Caco-2 (cell line): ENCODE measurements at regions of chr3 and their contacts with region 1.

Region 1: DNA sequence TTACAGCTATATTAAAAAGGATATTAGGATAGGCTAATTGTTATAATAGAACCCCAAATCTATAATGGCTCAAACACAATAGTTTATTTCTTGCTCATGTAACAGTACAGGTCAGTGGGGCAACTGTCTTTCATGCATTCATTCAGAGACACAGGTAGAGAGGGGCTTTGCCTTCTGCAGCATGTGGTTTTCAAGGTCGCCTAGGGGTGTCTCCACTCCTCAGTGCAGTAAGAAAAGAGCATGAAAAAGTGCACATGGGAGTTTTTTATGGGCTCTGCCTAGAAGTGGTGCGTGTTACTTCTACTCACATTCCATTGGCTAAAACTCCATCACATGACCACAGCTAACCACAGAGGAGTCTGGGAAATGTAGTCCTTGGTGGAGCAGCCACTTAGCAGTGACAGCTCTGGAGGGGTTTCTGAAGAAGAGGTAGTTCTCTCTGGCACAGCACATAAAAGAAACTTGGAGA is 1.8 kb downstream of the ZBTB38 start:
- DNase-seq: peak; percentile 83 to 85
- H3K4me3 ChIP-seq: no peak overlapping the region
- H3K4me3 Mint-ChIP-seq: peak overlapping the region; percentile 74
- H3K27ac Mint-ChIP-seq: peak overlapping the region; percentile 97
- H3K4me1 ChIP-seq: peaks cover 39% of the 10 kb centered on the region
- H3K4me1 Mint-ChIP-seq: peaks cover 46% of the 10 kb centered on the region
- H3K27me3 ChIP-seq: no peaks in the 10 kb centered on the region
- H3K27me3 Mint-ChIP-seq: no peaks in the 10 kb centered on the region
- CTCF ChIP-seq: peak; percentile 53 to 66

Region 2: GRCh38 chr3:141227752-141228151 is 142.3 kb before region 1 on chr3:
- CTCF ChIA-PET with region 1: no interaction called
- POLR2A ChIA-PET with region 1: no interaction called
- intact Hi-C with region 1: no loop called
- DNase-seq: no peak
- H3K4me3 ChIP-seq: no peak overlapping the region
- H3K4me3 Mint-ChIP-seq: no peak overlapping the region
- H3K27ac Mint-ChIP-seq: no peak overlapping the region
- H3K4me1 ChIP-seq: peaks cover 27% of the 10 kb centered on the region
- H3K4me1 Mint-ChIP-seq: peaks cover 27% of the 10 kb centered on the region
- H3K27me3 ChIP-seq: no peaks in the 10 kb centered on the region
- H3K27me3 Mint-ChIP-seq: no peaks in the 10 kb centered on the region
- CTCF ChIP-seq: no peak

Region 3: DNA sequence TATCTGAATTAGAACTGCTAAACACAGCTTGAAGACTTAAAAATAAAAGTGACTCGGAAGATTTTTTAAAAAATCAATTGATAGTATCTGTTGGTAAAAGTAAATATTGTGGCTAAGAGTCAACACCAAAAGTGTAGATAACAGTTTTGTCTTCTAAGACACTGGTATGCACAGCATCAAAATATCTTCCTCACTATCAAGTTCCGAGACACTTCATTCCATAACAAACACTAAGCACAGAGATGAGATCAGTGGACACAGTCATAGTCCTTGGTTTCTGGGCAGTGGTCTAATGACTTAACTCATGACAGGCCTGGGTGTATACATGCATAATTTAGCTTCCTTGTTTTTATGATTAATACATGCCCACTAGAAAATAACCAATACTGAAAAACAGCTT is 75.3 kb before region 1 on chr3:
- CTCF ChIA-PET with region 1: no interaction called
- POLR2A ChIA-PET with region 1: no interaction called
- intact Hi-C with region 1: no loop called
- DNase-seq: no peak
- H3K4me3 ChIP-seq: no peak overlapping the region
- H3K4me3 Mint-ChIP-seq: no peak overlapping the region
- H3K27ac Mint-ChIP-seq: no peak overlapping the region
- H3K4me1 ChIP-seq: no peaks in the 10 kb centered on the region
- H3K4me1 Mint-ChIP-seq: peaks cover 7% of the 10 kb centered on the region
- H3K27me3 ChIP-seq: no peaks in the 10 kb centered on the region
- H3K27me3 Mint-ChIP-seq: no peaks in the 10 kb centered on the region
- CTCF ChIP-seq: no peak

Region 4: DNA sequence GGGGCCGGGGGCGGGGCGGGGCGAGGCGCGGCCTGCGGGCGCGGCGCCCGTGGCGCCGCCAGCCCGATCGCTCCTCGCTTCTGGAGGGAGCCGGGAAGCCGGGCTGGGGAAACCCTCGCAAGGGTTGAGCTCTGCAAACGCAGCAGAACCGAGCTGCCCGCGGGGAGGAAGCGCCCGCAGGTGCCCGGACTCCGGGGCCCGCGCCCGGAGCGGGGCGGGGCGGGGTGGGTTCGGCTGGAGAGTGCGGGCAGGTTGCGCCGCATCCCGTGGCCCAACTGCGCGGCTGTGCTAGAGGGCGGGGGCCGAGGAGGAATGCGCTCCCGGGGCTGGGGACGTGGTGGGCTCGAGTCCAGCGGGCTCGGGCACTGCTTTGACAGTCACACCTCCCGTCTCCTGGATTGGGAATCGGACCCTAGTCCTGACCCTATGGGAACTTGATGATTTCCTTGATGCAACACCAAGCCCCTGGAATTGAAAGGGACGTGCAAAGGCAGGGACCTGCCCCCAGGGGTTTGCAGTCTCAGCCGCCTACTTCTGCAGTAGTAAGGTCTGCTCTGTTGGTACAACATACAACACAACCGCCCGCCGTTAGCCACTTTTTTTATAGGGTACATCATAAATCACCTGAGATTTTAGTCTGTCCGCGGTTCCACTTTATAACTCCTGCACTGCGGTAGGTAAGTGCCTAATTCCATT is 32.5 kb after region 1 on chr3:
- CTCF ChIA-PET with region 1: interaction called, 4 read pairs
- POLR2A ChIA-PET with region 1: interaction called, 5 read pairs
- intact Hi-C with region 1: loop called (anchors 2 kb)
- DNase-seq: peak; percentile 59 to 70
- H3K4me3 ChIP-seq: peak overlapping the region; percentile 70
- H3K4me3 Mint-ChIP-seq: peak overlapping the region; percentile 67
- H3K27ac Mint-ChIP-seq: no peak overlapping the region
- H3K4me1 ChIP-seq: peaks cover 29% of the 10 kb centered on the region
- H3K4me1 Mint-ChIP-seq: peaks cover 17% of the 10 kb centered on the region
- H3K27me3 ChIP-seq: no peaks in the 10 kb centered on the region
- H3K27me3 Mint-ChIP-seq: no peaks in the 10 kb centered on the region
- CTCF ChIP-seq: no peak

Region 5: GRCh38 chr3:141431411-141432378 is 61.6 kb after region 1 on chr3:
- CTCF ChIA-PET with region 1: no interaction called
- POLR2A ChIA-PET with region 1: interaction called, 5 read pairs
- intact Hi-C with region 1: loop called (anchors 1 kb)
- DNase-seq: peak; percentile 53 to 69
- H3K4me3 ChIP-seq: no peak overlapping the region
- H3K4me3 Mint-ChIP-seq: peak overlapping the region; percentile 49
- H3K27ac Mint-ChIP-seq: peak overlapping the region; percentile 85
- H3K4me1 ChIP-seq: peaks cover 50% of the 10 kb centered on the region
- H3K4me1 Mint-ChIP-seq: peaks cover 44% of the 10 kb centered on the region
- H3K27me3 ChIP-seq: no peaks in the 10 kb centered on the region
- H3K27me3 Mint-ChIP-seq: no peaks in the 10 kb centered on the region
- CTCF ChIP-seq: no peak

Region 6: DNA sequence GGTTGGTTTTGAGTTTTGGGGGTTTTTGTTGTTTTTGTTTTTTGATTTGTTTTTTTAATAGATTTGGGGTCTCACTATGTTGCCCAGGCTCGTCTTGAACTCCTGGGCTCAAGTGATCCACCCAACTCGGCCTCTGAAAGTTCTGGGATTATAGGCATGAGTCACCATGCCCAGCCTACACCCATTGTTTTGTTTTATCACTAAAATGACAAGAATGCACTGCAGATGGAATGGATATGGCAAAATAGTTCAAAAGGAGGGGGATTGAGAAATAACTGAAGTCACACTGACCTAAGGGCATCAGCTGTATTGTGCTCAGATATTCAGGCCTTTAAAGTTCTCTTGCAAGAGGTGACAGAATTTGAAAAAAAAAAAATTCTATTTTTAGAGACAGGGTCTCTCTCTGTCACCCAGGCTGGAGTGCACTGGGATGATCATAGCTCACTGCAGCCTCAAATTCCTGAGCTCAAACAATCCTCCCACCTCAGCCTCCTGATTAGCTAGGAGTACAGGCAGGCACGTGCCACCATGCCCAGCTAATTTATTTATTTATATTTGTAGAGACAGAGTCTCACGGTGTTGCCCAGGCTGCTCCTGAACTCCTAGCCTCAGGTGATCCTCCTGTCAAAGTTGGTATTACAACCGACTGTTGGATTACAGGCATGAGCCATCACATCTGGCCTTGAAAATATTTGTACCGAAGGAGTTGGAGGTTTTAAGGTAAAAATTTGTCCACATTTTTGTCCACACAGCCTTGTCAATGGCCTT is 112.3 kb after region 1 on chr3:
- CTCF ChIA-PET with region 1: no interaction called
- POLR2A ChIA-PET with region 1: interaction called, 3 read pairs
- intact Hi-C with region 1: loop called (anchors 1 kb)
- DNase-seq: peak; percentile 78 to 80
- H3K4me3 ChIP-seq: no peak overlapping the region
- H3K4me3 Mint-ChIP-seq: peak overlapping the region; percentile 34
- H3K27ac Mint-ChIP-seq: peak overlapping the region; percentile 88
- H3K4me1 ChIP-seq: peaks cover 49% of the 10 kb centered on the region
- H3K4me1 Mint-ChIP-seq: peaks cover 58% of the 10 kb centered on the region
- H3K27me3 ChIP-seq: no peaks in the 10 kb centered on the region
- H3K27me3 Mint-ChIP-seq: no peaks in the 10 kb centered on the region
- CTCF ChIP-seq: no peak